ENCODE measurements at regions of chr3 and their contacts with region 1.

Region 1: DNA sequence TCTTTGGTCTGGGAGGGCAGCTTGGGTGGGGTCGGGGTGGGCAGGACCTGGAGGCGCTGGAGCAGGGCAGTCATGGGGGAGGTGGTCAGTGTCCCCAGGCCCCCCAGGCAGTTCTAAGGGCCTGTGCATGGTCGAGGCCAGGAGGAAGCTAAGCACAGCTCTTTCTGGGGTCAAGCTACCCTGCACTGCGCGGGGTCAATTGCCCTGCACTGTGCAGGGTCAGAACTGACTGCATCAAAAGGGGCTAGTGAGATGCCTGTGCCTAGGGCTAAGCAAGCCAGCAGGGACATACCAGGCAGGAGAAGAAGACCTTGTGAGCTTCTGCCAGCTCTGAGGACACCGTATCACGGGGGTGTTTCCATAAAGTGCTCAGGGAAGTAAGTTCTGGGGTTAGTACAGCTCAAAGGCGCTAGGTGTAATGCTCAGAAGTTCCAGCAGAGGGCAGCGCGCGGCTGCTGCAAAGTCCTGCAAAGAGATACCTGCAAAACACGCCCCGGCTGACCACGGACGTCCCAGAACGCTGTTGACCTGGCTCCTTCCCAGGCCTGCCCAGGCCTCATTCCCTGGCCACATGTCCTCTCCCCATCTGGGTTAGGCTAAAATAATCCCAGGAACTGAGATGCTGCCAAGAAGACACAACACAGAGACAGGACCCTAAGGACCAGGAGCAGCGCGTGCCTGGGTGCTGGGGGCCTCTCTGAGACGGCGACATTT is 18.8 kb upstream of the IQSEC1 start:
- DNase-seq: peak; percentile 92
- ATAC-seq: peak; percentile 84
- H3K4me3 Mint-ChIP-seq: no peak overlapping the region
- H3K27ac Mint-ChIP-seq: no peak overlapping the region
- H3K4me1 Mint-ChIP-seq: peaks cover 21% of the 10 kb centered on the region
- H3K27me3 Mint-ChIP-seq: no peaks in the 10 kb centered on the region
- CTCF ChIP-seq: peak; percentile 99

Region 2: DNA sequence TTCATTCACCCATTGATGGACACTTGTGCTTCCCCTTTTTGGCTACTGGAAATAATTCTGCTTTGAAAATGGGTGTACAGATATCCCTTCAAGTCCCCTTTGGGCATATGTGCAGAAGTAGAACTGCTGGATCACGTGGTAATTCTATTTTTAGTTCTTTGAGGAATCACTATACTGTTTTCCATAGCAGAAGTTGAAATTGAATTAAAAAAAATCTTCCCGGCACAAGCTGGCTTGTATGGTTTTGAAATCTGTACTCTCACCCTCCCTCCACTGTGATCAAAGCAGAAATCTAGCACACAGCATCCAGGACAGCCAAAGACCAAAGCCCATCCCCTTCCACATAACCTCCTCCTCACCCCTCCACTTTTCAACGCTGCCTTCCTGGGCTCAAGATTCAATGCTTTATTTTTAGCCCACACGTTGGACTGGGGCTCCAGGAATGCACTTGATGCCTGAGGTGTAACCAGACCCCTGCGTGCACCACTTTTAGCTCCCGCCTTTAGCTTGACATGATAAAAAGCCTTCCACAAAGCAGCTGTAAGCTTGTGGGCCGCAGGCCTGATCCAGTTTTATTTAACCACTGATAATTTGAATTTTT is 362.9 kb before region 1 on chr3:
- CTCF ChIA-PET with region 1: no interaction called
- POLR2A ChIA-PET with region 1: no interaction called
- DNase-seq: peak; percentile 14
- ATAC-seq: no peak
- H3K4me3 Mint-ChIP-seq: no peak overlapping the region
- H3K27ac Mint-ChIP-seq: no peak overlapping the region
- H3K4me1 Mint-ChIP-seq: no peaks in the 10 kb centered on the region; the same call in 1 of the 2 replicates
- H3K27me3 Mint-ChIP-seq: peaks cover 4% of the 10 kb centered on the region
- CTCF ChIP-seq: no peak

Region 3: DNA sequence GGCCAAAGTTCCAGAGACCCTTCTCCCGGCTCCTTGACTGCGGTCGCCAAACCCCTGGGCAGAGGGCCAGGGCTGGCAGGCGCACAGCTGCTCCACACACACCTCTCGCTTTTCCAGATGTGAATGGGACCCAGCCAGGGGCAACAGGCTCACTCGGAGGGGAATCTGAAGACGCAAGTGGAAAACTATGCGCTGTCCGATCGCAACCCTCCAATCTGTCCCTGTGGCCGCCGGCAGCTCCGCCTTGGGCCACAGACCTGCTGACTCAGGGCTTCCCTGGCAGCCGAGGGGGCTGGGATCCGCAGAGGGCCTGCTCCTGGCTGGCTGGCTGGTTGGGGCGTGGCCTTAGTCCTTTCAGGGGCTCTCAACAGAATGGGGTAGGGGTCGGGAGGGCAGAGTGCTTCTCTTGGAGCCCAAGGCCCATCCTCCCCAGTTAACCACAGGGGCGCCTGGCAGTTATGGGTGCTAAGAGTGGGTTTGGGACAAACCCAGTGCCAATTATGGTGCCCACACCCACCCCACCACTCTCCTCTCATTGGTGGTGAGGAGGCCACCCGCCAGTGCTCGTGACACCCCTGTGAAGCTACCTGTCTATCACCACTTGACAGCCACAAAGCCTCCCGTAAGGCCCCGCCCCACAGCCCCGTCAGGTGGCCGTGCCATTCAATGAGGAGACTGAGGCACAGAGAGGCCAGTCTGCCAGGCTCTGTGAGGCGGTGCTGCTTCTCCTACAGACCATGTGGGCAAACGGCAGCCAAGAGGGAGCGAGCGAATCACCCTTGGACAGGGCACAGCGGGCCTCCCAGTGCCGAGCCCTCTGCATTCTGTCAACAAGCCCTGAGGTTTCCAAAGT is 72.6 kb before region 1 on chr3:
- CTCF ChIA-PET with region 1: interaction called, 11 read pairs
- POLR2A ChIA-PET with region 1: no interaction called
- DNase-seq: peak; percentile 80
- ATAC-seq: peak; percentile 77
- H3K4me3 Mint-ChIP-seq: peak overlapping the region; percentile 47
- H3K27ac Mint-ChIP-seq: no peak overlapping the region
- H3K4me1 Mint-ChIP-seq: peaks cover 46% of the 10 kb centered on the region
- H3K27me3 Mint-ChIP-seq: no peaks in the 10 kb centered on the region
- CTCF ChIP-seq: no peak

Region 4: DNA sequence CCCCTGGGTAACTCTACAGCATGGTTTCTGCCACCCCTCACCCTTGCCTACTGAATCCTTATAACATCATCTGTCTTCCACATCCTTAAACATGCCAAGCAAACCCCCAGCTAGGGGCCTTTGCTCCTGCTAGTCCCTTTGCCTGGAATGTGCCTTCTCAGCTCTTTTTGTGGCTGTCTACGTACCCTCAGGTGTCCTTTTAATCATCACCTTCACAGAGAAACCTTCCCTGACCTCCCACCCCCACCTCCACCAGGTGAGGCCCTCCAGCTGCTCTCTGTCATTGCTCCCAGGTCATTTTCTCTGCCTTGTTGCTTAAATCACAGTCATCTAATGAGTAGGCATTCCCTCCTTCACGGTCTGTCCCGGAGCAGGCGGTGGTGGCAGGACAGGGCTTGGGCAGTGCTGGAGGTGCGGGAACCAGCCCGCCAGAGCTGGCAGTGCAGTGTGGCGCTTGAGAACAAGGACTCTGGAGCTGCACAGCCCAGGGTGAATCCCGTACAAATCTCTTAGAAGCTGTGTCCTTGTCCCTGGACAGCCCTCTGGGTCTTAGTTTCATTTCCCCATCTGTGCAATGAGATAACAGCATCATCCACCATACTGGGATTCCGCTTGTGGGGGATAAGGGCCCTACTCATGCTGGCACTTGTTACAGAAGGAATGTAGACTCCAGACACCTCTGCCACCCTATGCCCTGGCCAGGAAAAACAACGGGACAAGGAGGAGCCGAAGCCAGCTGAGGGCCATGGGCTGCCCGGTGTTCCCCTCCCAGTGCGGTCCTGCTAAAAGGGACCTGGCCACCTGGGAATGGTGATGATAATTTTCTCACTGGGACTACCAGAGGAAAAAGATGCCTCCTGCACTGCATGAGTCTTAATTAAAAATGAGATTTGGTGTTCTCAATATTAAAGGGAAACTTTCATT is 33.3 kb after region 1 on chr3:
- CTCF ChIA-PET with region 1: interaction called, 13 read pairs
- POLR2A ChIA-PET with region 1: no interaction called
- DNase-seq: peak; percentile 9
- ATAC-seq: no peak
- H3K4me3 Mint-ChIP-seq: no peak overlapping the region
- H3K27ac Mint-ChIP-seq: no peak overlapping the region
- H3K4me1 Mint-ChIP-seq: peaks cover 4% of the 10 kb centered on the region; the same call in 1 of the 2 replicates
- H3K27me3 Mint-ChIP-seq: no peaks in the 10 kb centered on the region
- CTCF ChIP-seq: no peak

Region 5: DNA sequence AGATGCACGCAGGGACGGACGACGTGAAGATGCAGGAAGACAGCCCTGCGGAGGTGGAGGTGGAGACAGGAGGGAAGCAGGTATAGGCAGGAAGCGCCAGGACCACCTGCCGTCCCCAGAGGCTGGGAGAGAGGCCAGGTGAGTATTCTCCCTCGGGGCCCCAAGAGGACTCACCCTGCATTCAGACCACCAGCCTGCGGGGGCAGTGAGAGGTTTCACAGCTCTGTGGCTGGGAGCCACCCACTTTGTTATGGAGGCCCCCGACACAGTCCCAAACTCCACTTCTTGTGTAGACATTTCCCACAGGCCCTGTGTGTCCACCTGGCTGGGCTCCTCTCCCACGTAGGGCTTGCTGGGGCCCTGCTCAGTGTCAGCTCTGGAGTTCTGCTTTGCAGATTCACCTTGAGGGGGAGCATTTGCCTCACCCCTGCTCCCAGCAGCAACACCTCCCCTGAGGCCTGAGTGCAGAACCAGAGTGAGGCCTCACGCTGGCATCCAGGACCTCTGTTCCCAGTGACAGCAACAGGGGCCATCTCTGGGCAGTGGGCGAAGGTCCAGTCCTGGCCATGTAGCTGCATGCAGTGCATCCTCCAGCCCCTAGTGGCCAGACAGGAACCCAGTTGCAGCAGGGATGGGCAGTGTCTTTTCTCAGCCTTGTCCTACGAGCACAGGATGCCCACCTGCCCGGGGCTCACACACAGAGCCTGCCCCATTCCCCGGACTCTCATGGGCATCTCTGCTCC is 100.6 kb after region 1 on chr3:
- CTCF ChIA-PET with region 1: interaction called, 44 read pairs
- POLR2A ChIA-PET with region 1: no interaction called
- DNase-seq: peak; percentile 54
- ATAC-seq: peak; percentile 61
- H3K4me3 Mint-ChIP-seq: no peak overlapping the region
- H3K27ac Mint-ChIP-seq: no peak overlapping the region
- H3K4me1 Mint-ChIP-seq: peaks cover 27% of the 10 kb centered on the region
- H3K27me3 Mint-ChIP-seq: no peaks in the 10 kb centered on the region
- CTCF ChIP-seq: peak; percentile 41; the same call in 1 of the 2 replicates

Region 6: GRCh38 chr3:13419505-13420044 is 327.5 kb after region 1 on chr3:
- CTCF ChIA-PET with region 1: interaction called, 10 read pairs
- POLR2A ChIA-PET with region 1: no interaction called
- DNase-seq: peak; percentile 44
- ATAC-seq: peak; percentile 23
- H3K4me3 Mint-ChIP-seq: peak overlapping the region; percentile 78
- H3K27ac Mint-ChIP-seq: no peak overlapping the region
- H3K4me1 Mint-ChIP-seq: peaks cover 40% of the 10 kb centered on the region
- H3K27me3 Mint-ChIP-seq: peaks cover 6% of the 10 kb centered on the region
- CTCF ChIP-seq: no peak

Region 7: DNA sequence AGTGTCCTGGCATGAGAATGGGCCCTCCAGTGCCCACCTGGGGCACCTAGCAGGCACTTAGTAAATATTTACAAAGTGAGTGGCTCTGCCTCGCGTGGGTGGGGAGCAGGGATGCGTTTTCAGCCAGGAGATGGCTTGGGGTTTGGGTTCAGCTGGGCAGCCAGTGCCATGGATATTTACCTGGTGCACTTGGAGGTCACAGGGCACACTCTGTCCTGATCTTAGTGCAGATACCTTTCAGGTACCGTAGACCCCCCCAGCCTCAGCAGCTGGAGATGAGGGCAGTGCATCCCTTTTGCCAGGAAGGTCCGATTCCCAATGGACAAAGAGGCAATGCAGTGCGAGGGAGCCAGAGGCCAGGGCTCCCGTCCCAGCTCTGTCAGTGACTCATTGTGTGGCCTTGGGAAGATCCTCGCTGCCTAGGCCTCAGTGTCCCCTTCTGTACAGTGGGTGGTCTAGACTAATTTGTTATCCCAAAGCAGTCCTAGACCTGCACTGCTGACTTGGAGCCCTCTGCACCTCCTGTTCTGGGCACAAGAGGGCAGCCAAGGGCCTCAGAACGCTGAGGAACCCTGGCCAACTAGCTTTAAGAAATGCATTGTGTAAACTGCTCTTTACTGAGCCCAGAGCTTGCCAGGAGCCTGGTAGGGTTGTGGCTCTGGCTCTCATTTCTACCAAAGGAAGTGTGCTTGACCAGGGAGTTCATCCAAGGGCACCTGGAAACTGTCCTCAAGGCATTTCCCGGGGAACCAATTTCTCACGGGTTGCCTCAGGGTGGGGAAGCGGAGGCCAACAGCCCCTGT is 404.1 kb after region 1 on chr3:
- CTCF ChIA-PET with region 1: interaction called, 11 read pairs
- POLR2A ChIA-PET with region 1: no interaction called
- DNase-seq: peak; percentile 86
- ATAC-seq: peak; percentile 91
- H3K4me3 Mint-ChIP-seq: no peak overlapping the region
- H3K27ac Mint-ChIP-seq: 0 out of 2 replicates have a peak overlapping the region, but pooled peaks have one; percentile 49
- H3K4me1 Mint-ChIP-seq: peaks cover 6% of the 10 kb centered on the region; the same call in 1 of the 2 replicates
- H3K27me3 Mint-ChIP-seq: no peaks in the 10 kb centered on the region; the same call in 1 of the 2 replicates
- CTCF ChIP-seq: peak; percentile 77

Measured in WTC11 (cell line).